Psoas muscle (tissue), 8 donors: ENCODE measurements at regions of chr5 and their contacts with region 1.

Region 1: DNA sequence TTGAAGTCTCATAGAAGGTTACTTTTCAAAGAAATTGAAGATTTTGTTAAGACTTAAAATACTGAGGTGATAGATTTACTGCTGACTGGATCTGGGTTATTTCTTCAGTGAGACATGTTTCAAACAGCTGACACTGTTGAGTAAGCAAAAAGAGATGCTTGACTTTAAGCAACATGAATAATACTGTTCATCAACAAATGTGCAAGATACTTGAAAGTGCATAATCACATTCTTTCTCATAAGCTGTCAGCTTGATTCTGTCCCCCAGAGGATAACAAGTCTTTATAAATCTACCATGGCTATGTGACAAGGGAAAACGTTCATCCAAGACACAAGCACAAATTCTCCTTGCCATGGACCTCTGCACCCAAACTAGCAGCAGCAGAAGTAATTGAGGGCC is 260.1 kb upstream of the CDH18 start:
- DNase-seq: no peak
- ATAC-seq: no peak
- H3K4me3 ChIP-seq: no peak overlapping the region
- H3K27ac ChIP-seq: no peak overlapping the region
- H3K4me1 ChIP-seq: no peaks in the 10 kb centered on the region
- H3K27me3 ChIP-seq: no peaks in the 10 kb centered on the region
- CTCF ChIP-seq: no peak

Region 2: DNA sequence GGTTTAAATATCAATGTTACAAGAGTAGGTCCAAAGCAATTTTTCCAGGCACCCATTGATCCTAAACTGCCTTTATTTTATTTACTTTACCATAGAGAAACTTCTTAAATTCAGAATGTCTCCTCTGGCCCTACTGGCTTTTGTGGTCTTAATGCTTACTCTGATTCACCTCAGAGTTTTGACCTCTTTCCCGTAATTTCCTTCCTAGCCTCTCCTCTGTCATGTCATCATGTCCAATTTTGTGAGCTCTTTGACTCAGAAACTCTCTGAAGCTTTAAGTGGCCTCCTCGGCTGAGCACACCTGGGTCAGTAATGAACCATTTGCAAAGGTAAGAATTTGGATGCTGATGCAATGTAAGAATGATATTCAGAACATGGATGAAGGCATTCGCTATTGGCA is 43.6 kb after region 1 on chr5:
- intact Hi-C with region 1: no loop called
- DNase-seq: no peak
- ATAC-seq: no peak
- H3K4me3 ChIP-seq: no peak overlapping the region
- H3K27ac ChIP-seq: no peak overlapping the region
- H3K4me1 ChIP-seq: no peaks in the 10 kb centered on the region
- H3K27me3 ChIP-seq: no peaks in the 10 kb centered on the region
- CTCF ChIP-seq: no peak

Region 3: GRCh38 chr5:20307391-20307790 is 59.3 kb after region 1 on chr5:
- intact Hi-C with region 1: loop called in 1 of 2 experiments (anchors 2 kb)
- DNase-seq: no peak
- ATAC-seq: no peak
- H3K4me3 ChIP-seq: no peak overlapping the region
- H3K27ac ChIP-seq: no peak overlapping the region
- H3K4me1 ChIP-seq: no peaks in the 10 kb centered on the region
- H3K27me3 ChIP-seq: no peaks in the 10 kb centered on the region
- CTCF ChIP-seq: no peak

Region 4: GRCh38 chr5:21125238-21125983 is 877.3 kb after region 1 on chr5:
- intact Hi-C with region 1: no loop called
- DNase-seq: no peak
- ATAC-seq: no peak
- H3K4me3 ChIP-seq: no peak overlapping the region
- H3K27ac ChIP-seq: no peak overlapping the region
- H3K4me1 ChIP-seq: no peaks in the 10 kb centered on the region
- H3K27me3 ChIP-seq: no peaks in the 10 kb centered on the region
- CTCF ChIP-seq: no peak